HEK293 (cell line): ENCODE measurements at regions of chr4 and their contacts with region 1.

Region 1: GRCh38 chr4:10619220-10619619 is 65.3 kb downstream of the CLNK start:
- H3K4me3 ChIP-seq: no peak overlapping the region
- H3K27ac ChIP-seq: peak overlapping the region; percentile 62
- H3K4me1 ChIP-seq: peaks cover 3% of the 10 kb centered on the region; the same call in 1 of the 2 replicates
- CTCF ChIP-seq: no peak

Region 2: GRCh38 chr4:10589799-10590198 is 29.4 kb before region 1 on chr4:
- CTCF ChIA-PET with region 1: no interaction called
- POLR2A ChIA-PET with region 1: interaction called, 10 read pairs
- H3K4me3 ChIP-seq: no peak overlapping the region
- H3K27ac ChIP-seq: no peak overlapping the region
- H3K4me1 ChIP-seq: no peaks in the 10 kb centered on the region
- CTCF ChIP-seq: no peak

Region 3: GRCh38 chr4:10762561-10762960 is 143.3 kb after region 1 on chr4:
- CTCF ChIA-PET with region 1: no interaction called
- POLR2A ChIA-PET with region 1: no interaction called
- H3K4me3 ChIP-seq: no peak overlapping the region
- H3K27ac ChIP-seq: no peak overlapping the region
- H3K4me1 ChIP-seq: no peaks in the 10 kb centered on the region
- CTCF ChIP-seq: no peak